MCF 10A (cell line): ENCODE measurements at regions of chr9 and their contacts with region 1.

Region 1: DNA sequence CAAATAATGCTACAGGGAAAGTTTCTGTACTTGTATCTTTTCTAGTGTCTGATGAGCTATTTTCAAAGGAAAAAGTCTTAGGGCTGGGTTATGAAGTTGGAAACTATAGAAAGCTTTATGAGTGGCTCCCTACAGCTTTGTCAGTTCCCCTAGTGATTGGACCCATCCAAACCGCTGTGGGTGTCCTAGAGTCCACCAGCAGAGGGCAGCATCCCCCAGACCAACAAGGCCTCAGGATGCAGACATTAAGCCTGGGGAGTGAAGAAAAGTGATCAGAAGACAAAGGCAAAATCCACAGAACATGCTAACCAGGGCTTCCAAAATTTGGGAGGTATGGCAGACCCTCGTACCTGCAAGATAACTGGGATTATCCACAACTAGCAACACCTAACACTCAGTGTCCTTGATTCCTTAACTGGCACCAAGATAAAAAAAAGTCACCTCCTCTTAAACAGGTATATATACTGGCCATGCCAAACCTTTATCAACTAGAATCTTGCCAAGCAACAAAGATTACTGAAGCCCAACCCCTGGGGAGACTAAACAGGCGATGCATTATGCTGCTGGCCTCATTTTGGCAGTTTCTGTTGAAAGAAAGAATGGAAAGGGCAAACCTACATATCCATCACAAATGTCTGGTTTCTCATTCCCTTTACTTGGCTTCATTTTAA is 110.4 kb upstream of the NR5A1 start:
- DNase-seq: peak; percentile 85
- H3K4me3 Mint-ChIP-seq: no peak overlapping the region
- H3K27ac Mint-ChIP-seq: no peak overlapping the region
- H3K4me1 Mint-ChIP-seq: peaks cover 13% of the 10 kb centered on the region
- H3K27me3 Mint-ChIP-seq: no peaks in the 10 kb centered on the region
- CTCF ChIP-seq: peak; percentile 88

Region 2: DNA sequence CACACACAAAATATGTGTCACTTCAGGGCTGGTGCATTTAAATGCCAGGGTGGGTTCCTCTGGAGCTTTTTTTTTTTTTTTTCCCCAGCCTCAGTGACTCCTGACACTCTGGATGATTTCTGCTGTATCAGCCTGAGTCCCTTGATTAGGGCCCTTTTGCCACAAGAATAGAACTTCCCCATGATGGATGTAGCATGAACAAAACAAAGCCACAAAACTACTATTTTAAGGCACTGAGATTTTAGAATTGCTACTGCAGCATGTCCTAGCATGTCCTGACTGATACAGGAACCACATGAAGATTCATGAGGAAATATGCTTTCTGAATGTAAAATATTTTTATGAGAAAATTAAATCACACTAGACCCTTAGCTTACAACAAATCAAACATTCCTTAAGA is 181.3 kb before region 1 on chr9:
- CTCF ChIA-PET with region 1: no interaction called
- POLR2A ChIA-PET with region 1: no interaction called
- intact Hi-C with region 1: no loop called
- DNase-seq: no peak
- H3K4me3 Mint-ChIP-seq: no peak overlapping the region
- H3K27ac Mint-ChIP-seq: peak overlapping the region; percentile 42
- H3K4me1 Mint-ChIP-seq: no peaks in the 10 kb centered on the region
- H3K27me3 Mint-ChIP-seq: no peaks in the 10 kb centered on the region
- CTCF ChIP-seq: no peak

Region 3: DNA sequence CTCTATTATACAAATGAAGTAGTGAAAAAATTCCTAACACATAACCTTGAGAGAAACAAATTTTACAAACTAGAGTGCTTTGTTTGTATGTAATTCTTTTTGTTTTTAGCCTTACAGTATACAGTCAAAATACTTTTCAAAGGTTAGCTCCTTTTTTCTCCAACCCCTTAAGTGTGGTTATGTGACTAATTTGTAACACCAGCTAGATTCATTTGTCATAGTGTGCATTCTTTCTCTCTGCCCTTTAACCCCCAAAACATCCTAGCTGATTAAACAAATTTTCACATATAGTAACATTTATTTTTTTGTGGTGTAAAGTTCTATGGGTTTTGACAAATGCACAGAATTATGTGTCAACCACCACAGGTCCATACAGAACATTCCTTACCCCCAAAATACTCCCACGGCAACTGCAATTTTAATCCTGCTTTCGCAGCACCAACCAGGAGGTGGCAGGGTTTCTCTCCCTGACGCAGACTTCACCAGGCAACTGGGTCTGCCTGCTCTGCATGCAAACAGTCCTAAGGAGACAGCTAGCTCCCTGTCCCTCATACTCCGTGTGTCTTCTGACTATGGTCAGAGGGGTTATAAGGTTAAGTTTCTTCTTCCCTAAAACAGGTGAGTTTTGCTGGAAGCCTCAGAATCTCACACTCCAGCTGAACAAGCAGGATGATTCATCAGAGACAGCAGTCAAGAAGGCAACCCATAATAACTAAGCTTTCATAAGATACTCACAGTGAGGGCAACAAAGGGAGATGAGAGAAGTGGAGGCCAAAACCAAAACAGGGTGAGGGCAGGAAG is 65.9 kb before region 1 on chr9:
- CTCF ChIA-PET with region 1: interaction called, 52 read pairs
- POLR2A ChIA-PET with region 1: interaction called, 5 read pairs
- intact Hi-C with region 1: loop called (anchors 1 kb)
- DNase-seq: peak; percentile 59
- H3K4me3 Mint-ChIP-seq: no peak overlapping the region
- H3K27ac Mint-ChIP-seq: no peak overlapping the region
- H3K4me1 Mint-ChIP-seq: no peaks in the 10 kb centered on the region
- H3K27me3 Mint-ChIP-seq: no peaks in the 10 kb centered on the region
- CTCF ChIP-seq: peak; percentile 78

Region 4: GRCh38 chr9:124639637-124640036 is 22.0 kb after region 1 on chr9:
- CTCF ChIA-PET with region 1: interaction called, 20 read pairs
- POLR2A ChIA-PET with region 1: no interaction called
- intact Hi-C with region 1: no loop called
- DNase-seq: no peak
- H3K4me3 Mint-ChIP-seq: no peak overlapping the region
- H3K27ac Mint-ChIP-seq: no peak overlapping the region
- H3K4me1 Mint-ChIP-seq: no peaks in the 10 kb centered on the region
- H3K27me3 Mint-ChIP-seq: no peaks in the 10 kb centered on the region
- CTCF ChIP-seq: no peak

Region 5: GRCh38 chr9:124675261-124676158 is 57.9 kb after region 1 on chr9:
- CTCF ChIA-PET with region 1: interaction called, 10 read pairs
- POLR2A ChIA-PET with region 1: no interaction called
- intact Hi-C with region 1: no loop called
- DNase-seq: no peak
- H3K4me3 Mint-ChIP-seq: no peak overlapping the region
- H3K27ac Mint-ChIP-seq: no peak overlapping the region
- H3K4me1 Mint-ChIP-seq: no peaks in the 10 kb centered on the region
- H3K27me3 Mint-ChIP-seq: no peaks in the 10 kb centered on the region
- CTCF ChIP-seq: no peak

Region 6: GRCh38 chr9:124716808-124717207 is 99.2 kb after region 1 on chr9:
- CTCF ChIA-PET with region 1: interaction called, 228 read pairs
- POLR2A ChIA-PET with region 1: interaction called, 9 read pairs
- intact Hi-C with region 1: loop called (anchors 1 kb)
- DNase-seq: peak; percentile 25
- H3K4me3 Mint-ChIP-seq: no peak overlapping the region
- H3K27ac Mint-ChIP-seq: no peak overlapping the region
- H3K4me1 Mint-ChIP-seq: peaks cover 5% of the 10 kb centered on the region
- H3K27me3 Mint-ChIP-seq: no peaks in the 10 kb centered on the region
- CTCF ChIP-seq: no peak

Region 7: GRCh38 chr9:124754289-124754688 is 136.7 kb after region 1 on chr9:
- CTCF ChIA-PET with region 1: interaction called, 10 read pairs
- POLR2A ChIA-PET with region 1: interaction called, 3 read pairs
- intact Hi-C with region 1: loop called (anchors 1 kb)
- DNase-seq: peak; percentile 47
- H3K4me3 Mint-ChIP-seq: no peak overlapping the region
- H3K27ac Mint-ChIP-seq: no peak overlapping the region
- H3K4me1 Mint-ChIP-seq: peaks cover 32% of the 10 kb centered on the region
- H3K27me3 Mint-ChIP-seq: no peaks in the 10 kb centered on the region
- CTCF ChIP-seq: peak; percentile 45